BJ (cell line): ENCODE measurements at regions of chr5 and their contacts with region 1.

Region 1: GRCh38 chr5:142145106-142145900 is 36.7 kb downstream of the NDFIP1 start:
- DNase-seq: no peak
- H3K4me3 ChIP-seq: no peak overlapping the region
- H3K27me3 ChIP-seq: no peaks in the 10 kb centered on the region
- CTCF ChIP-seq: peak; percentile 82

Region 2: DNA sequence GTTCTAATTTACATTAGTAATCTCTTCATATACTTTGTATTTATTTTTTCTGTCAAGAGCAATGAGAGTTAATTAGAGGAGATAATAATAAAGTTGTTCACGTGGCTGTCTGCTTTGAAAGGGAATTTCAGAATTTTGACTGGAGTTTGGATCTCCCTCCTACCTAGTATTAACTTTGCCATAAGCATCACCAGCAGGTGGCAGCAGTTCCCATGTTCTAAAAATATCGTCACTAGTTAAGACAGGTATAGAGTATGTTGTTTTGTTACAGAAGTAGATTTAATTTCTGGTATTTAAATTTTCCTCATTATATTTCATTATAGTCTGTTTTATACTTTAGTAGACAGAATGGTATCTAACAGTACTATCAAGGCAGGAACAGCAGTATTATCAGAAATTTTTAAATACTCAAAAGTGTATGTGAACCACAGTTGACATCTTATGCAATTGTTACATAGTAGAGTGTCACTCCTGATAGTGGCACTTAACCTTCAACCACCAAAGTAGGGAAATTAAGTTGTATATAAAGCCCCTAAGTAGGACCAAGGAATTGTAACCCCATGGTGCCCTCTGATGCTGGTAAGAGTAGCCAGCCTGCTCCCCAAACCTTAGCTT is 152.8 kb before region 1 on chr5:
- CTCF ChIA-PET with region 1: interaction called, 124 read pairs
- POLR2A ChIA-PET with region 1: no interaction called
- DNase-seq: no peak
- H3K4me3 ChIP-seq: no peak overlapping the region
- H3K27me3 ChIP-seq: no peaks in the 10 kb centered on the region
- CTCF ChIP-seq: peak; percentile 72

Region 3: DNA sequence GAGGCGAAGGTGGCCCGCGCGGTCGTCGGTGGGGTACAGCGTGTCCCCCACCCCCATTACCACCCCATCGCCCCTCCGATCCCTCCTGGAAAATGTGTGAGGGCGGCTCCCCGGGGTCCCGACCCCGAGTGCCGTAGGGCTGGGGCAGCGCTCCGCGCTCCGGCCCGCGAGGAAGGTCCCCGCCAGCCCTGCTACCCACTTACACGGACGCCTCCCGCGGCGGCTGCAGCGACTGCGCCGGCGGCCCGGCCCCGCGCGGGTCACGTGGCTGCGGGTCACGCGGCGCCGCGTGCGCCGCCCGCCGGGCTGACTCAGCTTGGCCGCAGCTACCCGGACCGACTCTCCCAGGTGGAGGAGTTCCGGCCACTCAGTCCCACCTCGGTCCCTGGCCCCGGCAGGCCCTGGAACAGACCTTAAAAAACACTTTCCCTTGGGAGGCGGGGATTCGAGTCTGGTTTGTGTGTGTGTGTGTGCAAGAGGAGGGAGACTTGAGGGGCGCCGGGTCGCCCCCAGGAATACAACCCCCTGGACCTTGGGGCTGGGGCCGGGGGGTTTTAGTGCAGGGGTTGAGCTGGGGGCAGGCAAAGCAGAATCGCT is 132.4 kb before region 1 on chr5 and contains the start of gene GNPDA1:
- CTCF ChIA-PET with region 1: interaction called, 24 read pairs
- POLR2A ChIA-PET with region 1: no interaction called
- DNase-seq: no peak
- H3K4me3 ChIP-seq: peak within 1 kb of the TSS; percentile 68
- H3K27me3 ChIP-seq: peaks cover under 1% of the 10 kb centered on the region; the same call in 1 of the 2 replicates
- CTCF ChIP-seq: no peak
- polyA plus RNA-seq, gene GNPDA1: 12.5 TPM in 2 replicates

Region 4: GRCh38 chr5:142115937-142116614 is 29.2 kb before region 1 on chr5:
- CTCF ChIA-PET with region 1: no interaction called
- POLR2A ChIA-PET with region 1: no interaction called
- DNase-seq: no peak
- H3K4me3 ChIP-seq: no peak overlapping the region
- H3K27me3 ChIP-seq: no peaks in the 10 kb centered on the region
- CTCF ChIP-seq: no peak

Region 5: GRCh38 chr5:142133330-142134206 is 11.7 kb before region 1 on chr5:
- CTCF ChIA-PET with region 1: interaction called, 44 read pairs
- POLR2A ChIA-PET with region 1: no interaction called
- DNase-seq: no peak
- H3K4me3 ChIP-seq: no peak overlapping the region
- H3K27me3 ChIP-seq: no peaks in the 10 kb centered on the region
- CTCF ChIP-seq: no peak

Region 6: GRCh38 chr5:142316051-142316450 is 170.7 kb after region 1 on chr5:
- CTCF ChIA-PET with region 1: no interaction called
- POLR2A ChIA-PET with region 1: no interaction called
- DNase-seq: no peak
- H3K4me3 ChIP-seq: no peak overlapping the region
- H3K27me3 ChIP-seq: no peaks in the 10 kb centered on the region
- CTCF ChIP-seq: no peak

Region 7: GRCh38 chr5:142548739-142549275 is 403.5 kb after region 1 on chr5:
- CTCF ChIA-PET with region 1: interaction called, 13 read pairs
- POLR2A ChIA-PET with region 1: no interaction called
- DNase-seq: peak; percentile 85
- H3K4me3 ChIP-seq: no peak overlapping the region
- H3K27me3 ChIP-seq: no peaks in the 10 kb centered on the region
- CTCF ChIP-seq: peak; percentile 84